Thyroid gland (tissue), 4 donors: ENCODE measurements at regions of chr18 and their contacts with region 1.

Region 1: GRCh38 chr18:3012964-3013804 is at the start of gene LPIN2:
- DNase-seq: peak; percentile 99 to 100
- H3K4me3 ChIP-seq: peak within 1 kb of the TSS; percentile 75 to 84 (median 79)
- H3K27ac ChIP-seq: peak within 1 kb of the TSS; percentile 88 to 96 (median 95)
- H3K4me1 ChIP-seq: peaks cover 15 to 41% of the 10 kb centered on the region in 2 donors
- H3K27me3 ChIP-seq: no peaks in the 10 kb centered on the region
- CTCF ChIP-seq: no peak
- POLR2A ChIP-seq: peak in 1 of 2 donors; percentile 89
- total RNA-seq, gene LPIN2: 39.4 to 68.0 (median 47.4) TPM

Region 2: DNA sequence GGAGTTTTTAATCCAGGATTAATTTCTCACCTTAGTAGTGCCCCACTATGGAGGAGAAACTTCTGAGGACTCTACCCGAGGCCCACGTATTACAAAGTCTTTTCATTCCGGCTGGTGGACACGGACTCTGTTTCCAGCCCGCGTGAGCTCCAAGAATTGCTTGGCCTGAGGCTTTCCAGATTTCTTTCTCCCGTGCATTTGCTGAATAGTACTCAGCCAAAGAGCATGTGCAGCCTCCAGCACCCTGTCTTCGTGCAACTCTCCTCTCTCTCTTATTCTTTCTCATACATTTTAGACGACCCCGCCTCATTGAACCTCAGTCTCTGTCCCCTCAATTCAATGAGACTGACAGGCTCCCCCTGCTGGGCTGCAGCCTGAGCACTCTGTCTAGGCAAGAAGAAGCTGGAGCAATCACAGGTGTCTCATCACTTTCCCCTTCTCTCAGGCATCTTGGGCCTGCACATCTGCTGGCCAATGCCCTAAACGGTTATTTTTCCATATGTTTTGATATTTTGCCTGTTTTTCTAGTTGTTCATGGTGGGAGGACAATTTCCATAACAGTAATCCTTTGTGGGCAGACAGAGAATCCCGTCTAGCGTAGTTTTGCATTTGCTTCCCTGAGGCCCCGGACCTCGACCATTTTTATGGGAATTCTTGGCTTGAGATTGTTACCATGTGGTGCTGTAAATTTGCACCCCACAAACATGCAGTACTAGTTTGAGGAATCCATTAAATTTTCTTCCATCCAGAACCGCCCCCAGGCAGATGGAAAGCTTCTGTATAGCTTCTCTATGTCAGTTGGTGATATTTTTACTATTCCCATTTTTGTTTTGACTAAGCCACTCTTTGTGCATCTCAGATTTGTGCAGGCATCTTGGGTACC is 49.9 kb after region 1 on chr18:
- intact Hi-C with region 1: loop called (anchors 5 kb)
- DNase-seq: peak; percentile 59 to 64
- H3K4me3 ChIP-seq: no peak overlapping the region
- H3K27ac ChIP-seq: no peak overlapping the region
- H3K4me1 ChIP-seq: peaks cover 0 to 5% of the 10 kb centered on the region in 2 donors
- H3K27me3 ChIP-seq: no peaks in the 10 kb centered on the region
- CTCF ChIP-seq: peak; percentile 22 to 69 (median 53)
- POLR2A ChIP-seq: no peak

Region 3: DNA sequence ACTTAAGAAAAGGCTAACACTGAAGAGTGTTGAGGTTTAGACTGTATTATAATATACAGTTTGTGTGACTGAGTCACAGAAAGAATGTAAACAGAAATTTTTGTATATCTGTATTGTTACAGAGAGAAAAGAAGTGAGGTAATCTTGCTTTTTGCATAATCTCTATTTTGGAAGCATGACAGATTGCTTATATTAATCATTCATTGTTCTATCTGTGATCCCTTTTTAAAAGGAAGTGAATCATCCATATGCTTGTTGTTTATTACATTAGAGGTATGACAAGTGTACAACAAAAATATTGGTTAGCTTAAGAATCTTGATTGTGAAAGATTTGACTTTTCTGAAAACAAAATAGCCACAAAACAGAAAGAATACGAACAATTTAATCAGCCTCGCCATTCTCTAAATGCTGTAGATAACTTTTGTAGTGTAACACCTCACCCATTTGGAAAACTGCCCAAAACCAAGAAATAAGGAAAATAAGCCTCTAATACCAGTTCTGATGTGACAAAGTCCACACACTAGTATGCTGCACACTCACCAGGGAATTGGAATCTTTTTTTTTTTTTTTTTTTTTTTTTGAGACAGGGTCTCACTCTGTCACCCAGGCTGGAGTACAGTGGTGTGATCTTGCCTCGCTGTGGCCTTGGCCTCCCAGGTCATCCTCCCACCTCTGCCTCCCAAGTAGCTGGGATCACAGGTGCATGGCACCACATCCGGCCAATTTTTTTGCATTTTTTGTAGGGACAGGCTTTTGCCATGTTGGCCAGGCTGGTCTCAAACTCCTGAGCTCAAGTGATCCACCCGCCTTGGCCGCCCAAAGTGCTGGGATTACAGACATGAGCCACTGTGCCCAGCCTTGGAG is 91.2 kb after region 1 on chr18:
- intact Hi-C with region 1: no loop called
- DNase-seq: no peak
- H3K4me3 ChIP-seq: no peak overlapping the region
- H3K27ac ChIP-seq: no peak overlapping the region
- H3K4me1 ChIP-seq: no peaks in the 10 kb centered on the region
- H3K27me3 ChIP-seq: no peaks in the 10 kb centered on the region
- CTCF ChIP-seq: no peak
- POLR2A ChIP-seq: no peak

Region 4: GRCh38 chr18:3151399-3152264 is 138.4 kb after region 1 on chr18:
- intact Hi-C with region 1: no loop called
- DNase-seq: no peak
- H3K4me3 ChIP-seq: no peak overlapping the region
- H3K27ac ChIP-seq: no peak overlapping the region
- H3K4me1 ChIP-seq: peaks cover 6 to 11% of the 10 kb centered on the region in 2 donors
- H3K27me3 ChIP-seq: no peaks in the 10 kb centered on the region
- CTCF ChIP-seq: peak; percentile 36 to 88 (median 58)
- POLR2A ChIP-seq: no peak